Aorta (tissue), 5 donors: ENCODE measurements at regions of chr7 and their contacts with region 1.

Region 1: GRCh38 chr7:144001543-144001942 is 1.4 kb downstream of the OR6B1 start:
- DNase-seq: no peak
- ATAC-seq: no peak
- H3K4me3 ChIP-seq: no peak overlapping the region
- H3K27ac ChIP-seq: no peak overlapping the region
- H3K4me1 ChIP-seq: no peaks in the 10 kb centered on the region
- H3K27me3 ChIP-seq: no peaks in the 10 kb centered on the region

Region 2: DNA sequence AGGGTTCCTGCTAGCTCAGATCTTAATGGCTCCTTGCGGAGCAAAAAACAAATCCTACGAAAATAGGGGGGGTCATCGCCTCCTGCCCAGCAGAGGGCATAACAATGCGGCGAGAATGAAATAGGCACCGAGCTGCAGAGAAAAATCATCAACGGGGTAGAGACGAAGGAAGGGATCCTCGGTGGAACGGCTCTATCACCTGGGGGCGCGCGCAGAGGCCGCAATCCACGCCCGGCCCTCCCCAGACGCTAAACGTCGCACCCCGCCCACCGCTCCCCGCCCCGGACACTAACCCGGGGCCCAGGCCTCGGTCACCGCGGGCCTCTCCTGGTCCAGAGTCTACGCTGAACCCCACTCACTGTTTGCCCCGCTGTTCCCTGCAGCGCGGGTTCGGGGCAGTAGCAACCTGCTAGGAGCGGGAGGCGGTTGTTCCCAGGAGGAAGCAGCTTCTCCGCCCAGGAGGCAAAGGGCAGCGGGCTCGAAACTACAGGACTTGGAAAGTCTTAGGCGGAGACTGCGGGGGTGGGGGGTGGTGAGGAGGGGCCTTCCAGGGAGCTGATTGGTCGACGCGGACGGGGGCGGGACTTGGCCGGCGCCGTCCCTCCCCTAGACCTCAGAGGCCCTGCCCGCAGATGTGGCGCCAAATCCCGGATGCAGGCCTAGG is 99.7 kb before region 1 on chr7 and contains the start of gene TCAF1:
- intact Hi-C with region 1: loop called in 1 of 2 experiments (anchors 10 kb)
- DNase-seq: peak; percentile 98 to 99
- ATAC-seq: peak; percentile 99
- H3K4me3 ChIP-seq: peak within 1 kb of the TSS; percentile 78 to 96
- H3K27ac ChIP-seq: peak within 1 kb of the TSS; percentile 54 to 97
- H3K4me1 ChIP-seq: no peaks in the 10 kb centered on the region
- H3K27me3 ChIP-seq: no peaks in the 10 kb centered on the region
- total RNA-seq, gene TCAF1: 42.1 to 58.6 TPM

Region 3: GRCh38 chr7:143924851-143925250 is 76.7 kb before region 1 on chr7:
- intact Hi-C with region 1: no loop called
- DNase-seq: no peak
- ATAC-seq: no peak
- H3K4me3 ChIP-seq: no peak overlapping the region
- H3K27ac ChIP-seq: no peak overlapping the region
- H3K4me1 ChIP-seq: no peaks in the 10 kb centered on the region
- H3K27me3 ChIP-seq: no peaks in the 10 kb centered on the region